Endothelial cell of umbilical vein (primary cell): ENCODE measurements at regions of chr13 and their contacts with region 1.

Region 1: GRCh38 chr13:40190641-40191100 is 475.8 kb downstream of the FOXO1 start:
- DNase-seq: peak; percentile 89
- H3K4me3 ChIP-seq: no peak overlapping the region
- H3K27ac ChIP-seq: peak overlapping the region; percentile 85
- H3K4me1 ChIP-seq: peaks cover 53% of the 10 kb centered on the region
- H3K27me3 ChIP-seq: no peaks in the 10 kb centered on the region
- CTCF ChIP-seq: no peak
- POLR2A ChIP-seq: no peak

Region 2: GRCh38 chr13:39565036-39565949 is 625.4 kb before region 1 on chr13:
- CTCF ChIA-PET with region 1: no interaction called
- POLR2A ChIA-PET with region 1: no interaction called
- dilution Hi-C with region 1: no loop called
- intact Hi-C with region 1: no loop called
- DNase-seq: peak; percentile 70
- H3K4me3 ChIP-seq: peak overlapping the region in 1 of 3 experiments; percentile 32
- H3K27ac ChIP-seq: peak overlapping the region; percentile 49
- H3K4me1 ChIP-seq: peaks cover 14% of the 10 kb centered on the region
- H3K27me3 ChIP-seq: no peaks in the 10 kb centered on the region
- CTCF ChIP-seq: no peak
- POLR2A ChIP-seq: no peak

Region 3: GRCh38 chr13:39876258-39876657 is 314.4 kb before region 1 on chr13:
- CTCF ChIA-PET with region 1: no interaction called
- POLR2A ChIA-PET with region 1: interaction called, 3 read pairs
- dilution Hi-C with region 1: no loop called
- intact Hi-C with region 1: loop called (anchors 5 kb)
- DNase-seq: peak; percentile 90
- H3K4me3 ChIP-seq: no peak overlapping the region
- H3K27ac ChIP-seq: peak overlapping the region; percentile 98
- H3K4me1 ChIP-seq: peaks cover 67% of the 10 kb centered on the region
- H3K27me3 ChIP-seq: no peaks in the 10 kb centered on the region
- CTCF ChIP-seq: no peak
- POLR2A ChIP-seq: peak; percentile 25

Region 4: GRCh38 chr13:40082639-40083038 is 108.0 kb before region 1 on chr13:
- CTCF ChIA-PET with region 1: interaction called, 3 read pairs
- POLR2A ChIA-PET with region 1: no interaction called
- dilution Hi-C with region 1: no loop called
- intact Hi-C with region 1: loop called (anchors 1 kb)
- DNase-seq: peak; percentile 99
- H3K4me3 ChIP-seq: no peak overlapping the region
- H3K27ac ChIP-seq: peak overlapping the region; percentile 71
- H3K4me1 ChIP-seq: peaks cover 11% of the 10 kb centered on the region
- H3K27me3 ChIP-seq: no peaks in the 10 kb centered on the region
- CTCF ChIP-seq: peak; percentile 30 to 62
- POLR2A ChIP-seq: no peak

Region 5: DNA sequence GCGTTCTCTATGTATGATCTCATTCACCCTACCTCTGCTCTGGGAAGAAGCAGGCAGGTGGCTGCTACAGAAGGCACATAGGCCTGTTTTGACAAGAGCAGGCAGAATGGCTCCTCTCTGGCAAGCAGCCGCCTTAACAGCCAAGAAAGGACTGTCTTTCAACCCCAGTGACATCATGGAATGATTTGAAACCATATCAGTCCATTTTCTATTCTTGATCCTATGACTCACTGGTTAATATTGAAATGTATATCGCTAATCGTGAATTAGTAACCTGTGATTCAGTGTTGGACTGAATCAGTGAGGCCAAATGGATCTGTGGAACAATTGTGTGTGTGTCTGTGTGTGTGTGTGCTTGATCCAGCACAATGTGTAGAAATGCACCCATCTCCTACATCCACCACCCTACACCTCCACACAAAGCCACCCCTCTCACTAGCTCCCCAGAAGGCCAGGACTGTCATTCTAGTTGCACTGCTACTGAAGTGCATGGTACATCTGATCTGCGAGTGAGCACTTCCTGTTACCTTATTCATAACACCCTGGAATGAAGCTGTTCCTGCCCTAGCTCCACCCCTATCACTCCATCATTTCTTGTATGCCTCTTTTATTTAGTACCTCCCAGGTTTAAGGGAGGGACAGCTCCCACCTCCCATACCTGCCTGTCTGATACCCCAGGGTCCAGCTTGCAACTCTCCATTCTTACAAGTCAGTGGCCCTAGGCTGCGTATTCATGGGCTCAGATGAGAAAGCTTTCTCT is 15.8 kb after region 1 on chr13:
- CTCF ChIA-PET with region 1: interaction called, 6 read pairs
- POLR2A ChIA-PET with region 1: interaction called, 5 read pairs
- dilution Hi-C with region 1: no loop called
- intact Hi-C with region 1: loop called (anchors 1 kb)
- DNase-seq: peak; percentile 88
- H3K4me3 ChIP-seq: peak overlapping the region in 1 of 3 experiments; percentile 8
- H3K27ac ChIP-seq: peak overlapping the region; percentile 93
- H3K4me1 ChIP-seq: peaks cover 25% of the 10 kb centered on the region
- H3K27me3 ChIP-seq: no peaks in the 10 kb centered on the region
- CTCF ChIP-seq: no peak
- POLR2A ChIP-seq: no peak

Region 6: GRCh38 chr13:40401911-40402776 is 211.5 kb after region 1 on chr13:
- CTCF ChIA-PET with region 1: no interaction called
- POLR2A ChIA-PET with region 1: no interaction called
- dilution Hi-C with region 1: no loop called
- intact Hi-C with region 1: loop called (anchors 1 kb)
- DNase-seq: peak; percentile 93
- H3K4me3 ChIP-seq: no peak overlapping the region
- H3K27ac ChIP-seq: peak overlapping the region; percentile 61
- H3K4me1 ChIP-seq: peaks cover 31% of the 10 kb centered on the region
- H3K27me3 ChIP-seq: no peaks in the 10 kb centered on the region
- CTCF ChIP-seq: no peak
- POLR2A ChIP-seq: no peak

Region 7: GRCh38 chr13:40558656-40559055 is 368.0 kb after region 1 on chr13:
- CTCF ChIA-PET with region 1: interaction called, 3 read pairs
- POLR2A ChIA-PET with region 1: no interaction called
- dilution Hi-C with region 1: no loop called
- intact Hi-C with region 1: loop called (anchors 1 kb)
- DNase-seq: peak; percentile 95
- H3K4me3 ChIP-seq: peak overlapping the region in 1 of 3 experiments; percentile 1
- H3K27ac ChIP-seq: peak overlapping the region; percentile 61
- H3K4me1 ChIP-seq: peaks cover 56% of the 10 kb centered on the region
- H3K27me3 ChIP-seq: no peaks in the 10 kb centered on the region
- CTCF ChIP-seq: no peak
- POLR2A ChIP-seq: peak; percentile 35